Activated CD4-positive, alpha-beta T cell treated with anti-CD3 and anti-CD28 coated beads, Interleukin-2, amount 10 ng/mL, durations not matched to agents 24 days and 14 days (primary cell): ENCODE measurements at regions of chr11 and their contacts with region 1.

Region 1: GRCh38 chr11:73876424-73877300 is at the starts of genes COA4 and PAAF1:
- DNase-seq: peak; percentile 98
- H3K4me3 Mint-ChIP-seq: peak within 1 kb of the TSS; percentile 95
- H3K27ac Mint-ChIP-seq: peak within 1 kb of the TSS; percentile 98
- H3K4me1 Mint-ChIP-seq: peaks cover 26% of the 10 kb centered on the region
- H3K27me3 Mint-ChIP-seq: no peaks in the 10 kb centered on the region
- total RNA-seq, gene COA4: 92.7 and 98.0 TPM in 2 replicates
- total RNA-seq, gene PAAF1: 26.7 and 28.6 TPM in 2 replicates

Region 2: GRCh38 chr11:73538381-73538872 is 338.2 kb before region 1 on chr11:
- intact Hi-C with region 1: no loop called
- DNase-seq: peak; percentile 78
- H3K4me3 Mint-ChIP-seq: peak overlapping the region; percentile 50
- H3K27ac Mint-ChIP-seq: peak overlapping the region; percentile 83
- H3K4me1 Mint-ChIP-seq: peaks cover 22% of the 10 kb centered on the region
- H3K27me3 Mint-ChIP-seq: no peaks in the 10 kb centered on the region

Region 3: GRCh38 chr11:73760679-73761402 is 115.8 kb before region 1 on chr11 and contains the start of gene RAB6A:
- intact Hi-C with region 1: loop called (anchors 1 kb)
- DNase-seq: peak; percentile 100
- H3K4me3 Mint-ChIP-seq: peak within 1 kb of the TSS; percentile 97
- H3K27ac Mint-ChIP-seq: peak within 1 kb of the TSS; percentile 92
- H3K4me1 Mint-ChIP-seq: peaks cover 32% of the 10 kb centered on the region
- H3K27me3 Mint-ChIP-seq: peaks cover 3% of the 10 kb centered on the region
- total RNA-seq, gene RAB6A: 74.3 and 79.5 TPM in 2 replicates

Region 4: DNA sequence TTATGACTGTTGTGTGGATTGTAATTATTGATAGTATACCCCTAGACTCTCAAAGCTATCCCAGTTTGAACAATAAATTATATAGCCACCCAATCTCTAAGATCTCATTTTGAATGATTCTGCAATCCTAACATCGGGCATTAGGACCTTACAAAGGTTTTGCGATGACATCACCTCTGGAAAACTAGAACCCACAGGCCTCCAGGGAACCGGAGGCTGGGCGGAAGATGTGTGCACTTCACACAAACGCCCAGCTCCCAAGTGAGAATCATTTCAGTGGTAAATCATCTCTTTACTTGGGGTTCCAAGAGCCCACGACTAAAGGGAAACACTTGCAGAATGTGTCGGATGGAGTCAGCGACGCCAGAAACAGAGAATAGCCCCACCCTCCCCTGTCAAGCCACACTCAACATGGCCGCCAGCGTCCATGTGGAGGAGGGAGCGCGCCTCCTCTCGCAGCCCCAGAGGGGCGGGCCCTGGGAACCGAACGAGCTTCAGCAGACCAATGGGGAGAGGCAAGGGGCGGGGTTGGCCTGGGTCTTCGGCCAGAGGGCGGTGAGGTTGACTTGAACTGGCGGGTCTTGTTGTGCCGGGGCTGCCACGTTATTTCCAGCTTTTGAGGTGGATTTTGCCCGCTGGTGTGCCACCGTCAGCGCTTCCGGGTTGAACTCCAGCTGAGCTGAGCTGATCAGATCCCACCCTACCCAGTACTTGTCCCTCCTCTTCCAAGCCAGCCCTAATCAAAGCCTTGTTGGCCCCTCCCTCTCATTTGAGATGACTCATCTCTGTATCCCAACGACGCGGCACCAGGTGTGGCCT is 97.4 kb before region 1 on chr11:
- intact Hi-C with region 1: loop called (anchors 1 kb)
- DNase-seq: peak; percentile 99
- H3K4me3 Mint-ChIP-seq: peak overlapping the region; percentile 92
- H3K27ac Mint-ChIP-seq: peak overlapping the region; percentile 98
- H3K4me1 Mint-ChIP-seq: peaks cover 8% of the 10 kb centered on the region
- H3K27me3 Mint-ChIP-seq: no peaks in the 10 kb centered on the region

Region 5: DNA sequence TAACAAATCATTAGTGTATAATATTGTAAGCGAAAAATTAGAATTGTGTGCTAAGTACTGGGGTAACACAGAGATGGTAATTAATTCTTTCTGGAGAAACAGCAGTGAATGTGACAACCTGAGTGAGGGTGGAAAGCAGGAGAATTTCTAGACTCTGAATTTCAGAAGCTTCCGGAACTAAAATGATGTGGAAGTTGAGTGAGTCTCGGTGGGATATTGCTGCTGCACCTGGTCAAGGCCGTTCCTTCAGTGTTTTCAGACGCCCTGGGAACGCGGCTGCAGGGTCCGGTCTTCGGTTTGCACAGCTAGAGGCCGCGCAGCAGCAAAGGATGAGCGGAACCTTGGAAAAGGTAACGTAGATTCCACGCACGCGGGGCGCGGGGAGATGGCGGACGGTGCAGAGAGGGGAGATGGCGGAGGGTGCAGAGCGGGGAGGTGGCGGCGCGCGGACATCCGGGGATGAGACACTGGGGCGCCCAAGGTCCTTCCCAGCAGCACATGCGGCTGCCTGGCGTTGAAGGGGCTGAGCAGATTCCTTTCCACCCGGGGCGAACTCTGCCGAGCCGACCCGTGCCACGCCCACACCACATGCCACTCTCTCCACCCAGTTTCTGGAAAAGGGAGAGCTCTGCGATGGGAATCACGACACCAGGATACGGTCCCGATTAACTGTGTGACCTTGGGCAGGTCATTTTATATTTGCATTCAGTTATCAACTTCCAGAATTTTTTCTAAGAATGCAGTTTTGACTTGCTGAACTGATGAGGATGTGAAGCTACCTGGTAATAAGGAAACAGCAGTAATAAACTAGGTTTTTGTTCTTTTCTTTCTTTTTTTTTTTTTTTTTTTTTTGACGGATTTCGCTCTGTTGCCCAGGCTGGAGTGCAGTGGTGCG is 88.8 kb before region 1 on chr11 and contains the start of gene MRPL48:
- intact Hi-C with region 1: loop called (anchors 1 kb)
- DNase-seq: peak; percentile 96
- H3K4me3 Mint-ChIP-seq: peak within 1 kb of the TSS; percentile 99
- H3K27ac Mint-ChIP-seq: peak within 1 kb of the TSS; percentile 95
- H3K4me1 Mint-ChIP-seq: peaks cover 14% of the 10 kb centered on the region
- H3K27me3 Mint-ChIP-seq: no peaks in the 10 kb centered on the region
- total RNA-seq, gene MRPL48: 67.2 and 69.0 TPM in 2 replicates